Right cardiac atrium (tissue), 5 donors: ENCODE measurements at regions of chr9 and their contacts with region 1.

Region 1: DNA sequence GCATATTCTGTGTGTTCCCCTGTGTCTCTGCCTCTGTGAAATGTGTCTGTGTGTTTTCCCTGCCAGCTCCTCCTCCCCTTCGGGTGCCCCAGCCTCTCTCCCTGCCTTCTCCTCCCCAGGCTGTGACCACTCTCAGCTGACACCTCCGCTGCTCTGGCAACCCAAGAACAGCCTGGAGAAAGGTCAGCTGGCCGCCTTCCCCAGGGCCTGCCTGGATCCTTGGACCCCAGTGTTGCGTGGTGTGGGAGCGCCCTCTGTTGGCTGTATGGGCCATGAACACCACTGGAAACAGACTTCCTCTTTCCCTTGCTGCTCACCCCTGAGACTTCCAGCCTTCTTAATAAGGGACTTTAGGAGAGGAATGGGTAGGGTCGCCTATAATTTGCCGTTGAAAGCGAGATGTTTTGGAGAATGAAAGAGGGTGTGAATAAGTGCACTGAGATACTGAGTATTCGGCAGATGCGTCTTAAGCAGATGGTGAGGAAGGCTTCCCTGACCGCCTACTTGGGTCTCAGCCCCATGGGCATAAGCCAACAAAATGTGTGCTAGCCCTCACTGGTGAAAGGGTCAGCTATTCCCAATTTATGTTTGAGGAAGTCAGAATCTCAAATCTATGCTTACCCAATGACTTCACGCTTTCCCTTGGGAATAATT is 114.9 kb upstream of the TRIM32 start:
- DNase-seq: peak; percentile 94 to 98 (median 97)
- ATAC-seq: peak; percentile 97
- H3K4me3 ChIP-seq: no peak overlapping the region
- H3K27ac ChIP-seq: no peak overlapping the region
- H3K4me1 ChIP-seq: peaks cover 5% of the 10 kb centered on the region
- H3K27me3 ChIP-seq: no peaks in the 10 kb centered on the region

Region 2: GRCh38 chr9:115883457-115884329 is 688.5 kb before region 1 on chr9:
- intact Hi-C with region 1: loop called in 1 of 4 experiments (anchors 10 kb)
- DNase-seq: peak in 1 of 3 donors; percentile 42
- ATAC-seq: peak; percentile 46 to 77
- H3K4me3 ChIP-seq: no peak overlapping the region
- H3K27ac ChIP-seq: no peak overlapping the region
- H3K4me1 ChIP-seq: peaks cover 1% of the 10 kb centered on the region
- H3K27me3 ChIP-seq: no peaks in the 10 kb centered on the region

Region 3: DNA sequence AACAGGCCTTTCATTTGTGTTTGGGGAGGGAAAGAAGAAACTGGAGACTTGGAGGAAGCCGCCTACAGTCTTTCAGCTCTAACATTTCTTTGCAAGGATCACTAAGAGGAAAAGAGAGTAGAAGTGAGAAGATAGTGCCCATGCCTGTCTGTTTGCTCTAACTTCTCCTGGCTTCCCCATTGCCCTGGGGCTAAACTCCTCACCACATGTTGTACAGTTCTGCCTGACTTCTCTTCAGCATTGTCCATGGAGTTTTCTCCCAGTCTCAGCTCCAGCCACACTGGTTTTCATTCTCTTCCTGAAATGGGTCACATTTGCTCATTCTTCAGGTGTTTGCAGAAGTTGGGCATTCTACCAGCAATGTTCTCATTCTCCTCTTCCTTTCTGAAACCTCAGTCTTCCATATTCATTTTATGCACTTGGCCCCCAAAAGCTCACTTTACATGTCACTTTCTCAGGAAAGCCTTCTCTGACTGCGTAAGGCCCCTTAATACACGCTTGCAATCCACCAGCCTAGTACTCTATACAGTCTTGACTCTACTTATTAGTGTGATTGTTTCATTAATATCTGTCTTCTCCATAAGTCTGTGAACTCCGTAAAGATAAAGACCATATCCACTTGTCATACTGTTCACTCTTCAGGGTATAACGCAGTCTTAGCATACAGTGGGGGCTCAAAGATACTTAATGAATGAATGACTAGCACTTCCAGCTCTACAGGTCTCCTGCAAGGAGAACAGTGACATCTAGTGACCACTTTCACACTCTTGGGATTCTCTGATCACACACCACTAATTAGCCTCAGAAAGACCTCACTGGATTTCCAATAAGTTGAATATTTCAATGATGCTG is 74.7 kb after region 1 on chr9:
- intact Hi-C with region 1: loop called in 2 of 4 experiments (anchors 5 to 10 kb)
- DNase-seq: no peak
- ATAC-seq: peak; percentile 77 to 85
- H3K4me3 ChIP-seq: no peak overlapping the region
- H3K27ac ChIP-seq: peak overlapping the region; percentile 42
- H3K4me1 ChIP-seq: peaks cover 2% of the 10 kb centered on the region
- H3K27me3 ChIP-seq: no peaks in the 10 kb centered on the region